GM12878 (cell line): ENCODE measurements at regions of chr5 and their contacts with region 1.

Region 1: DNA sequence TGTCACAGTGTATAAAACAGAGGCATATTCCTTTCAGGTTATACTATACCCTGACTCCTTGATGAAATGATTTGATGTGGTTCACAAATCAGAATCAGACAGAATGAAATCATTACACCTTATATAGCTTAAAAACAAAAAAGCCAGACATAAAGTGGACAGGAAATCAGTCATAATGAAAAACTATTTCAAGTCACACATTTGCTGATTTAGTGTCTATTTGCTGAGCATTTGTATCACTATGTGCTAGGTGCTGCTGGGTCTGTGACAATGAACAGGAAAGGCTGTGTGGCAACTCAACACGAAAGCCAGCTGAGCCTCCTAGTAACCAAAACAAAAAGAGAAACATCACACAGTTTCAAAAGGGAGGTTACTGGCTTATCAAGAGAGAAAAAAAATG is 194.0 kb downstream of the EFNA5 start:
- DNase-seq: peak; percentile 80
- ATAC-seq: peak; percentile 90
- H3K4me3 ChIP-seq: no peak overlapping the region
- H3K27ac ChIP-seq: peak overlapping the region; percentile 50
- H3K4me1 ChIP-seq: peaks cover 23% of the 10 kb centered on the region
- H3K27me3 ChIP-seq: no peaks in the 10 kb centered on the region; a peak in 1 of 4 replicates
- CTCF ChIP-seq: no peak
- EP300 ChIP-seq: peak; percentile 83 to 99
- POLR2A ChIP-seq: no peak
- RAD21 ChIP-seq: 0 out of 2 replicates have a peak, but pooled peaks have one; percentile 4

Region 2: GRCh38 chr5:106849266-106849665 is 627.5 kb before region 1 on chr5:
- CTCF ChIA-PET with region 1: no interaction called
- POLR2A ChIA-PET with region 1: no interaction called
- RAD21 ChIA-PET with region 1: no interaction called
- SMC1A ChIA-PET with region 1: no interaction called
- in situ Hi-C with region 1: no loop called
- intact Hi-C with region 1: no loop called
- DNase-seq: no peak
- ATAC-seq: no peak
- H3K4me3 ChIP-seq: no peak overlapping the region
- H3K27ac ChIP-seq: no peak overlapping the region
- H3K4me1 ChIP-seq: no peaks in the 10 kb centered on the region
- H3K27me3 ChIP-seq: no peaks in the 10 kb centered on the region
- CTCF ChIP-seq: no peak
- EP300 ChIP-seq: no peak
- POLR2A ChIP-seq: no peak
- RAD21 ChIP-seq: no peak

Region 3: DNA sequence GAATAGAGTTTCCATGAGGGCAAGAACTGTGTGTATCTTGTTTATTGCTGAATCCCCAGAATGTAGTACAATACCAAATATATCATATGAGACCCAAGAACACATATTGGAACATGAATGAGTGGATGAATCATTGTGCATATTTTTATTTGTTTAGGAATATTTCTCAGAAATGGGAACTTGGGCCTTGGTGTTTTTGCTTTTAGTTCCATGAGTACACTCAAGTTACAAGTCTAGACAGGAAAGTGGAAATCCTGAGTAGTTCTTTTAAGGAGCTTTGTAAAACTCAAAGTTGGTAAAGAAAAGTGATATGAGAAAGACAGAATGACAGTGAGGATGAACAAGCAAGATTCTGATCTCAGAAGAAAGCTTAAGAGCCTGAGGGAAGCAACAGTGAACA is 453.1 kb before region 1 on chr5:
- CTCF ChIA-PET with region 1: no interaction called
- POLR2A ChIA-PET with region 1: no interaction called
- RAD21 ChIA-PET with region 1: no interaction called
- SMC1A ChIA-PET with region 1: no interaction called
- in situ Hi-C with region 1: no loop called
- intact Hi-C with region 1: no loop called
- DNase-seq: no peak
- ATAC-seq: no peak
- H3K4me3 ChIP-seq: no peak overlapping the region
- H3K27ac ChIP-seq: no peak overlapping the region
- H3K4me1 ChIP-seq: no peaks in the 10 kb centered on the region
- H3K27me3 ChIP-seq: no peaks in the 10 kb centered on the region
- CTCF ChIP-seq: no peak
- EP300 ChIP-seq: no peak
- POLR2A ChIP-seq: no peak
- RAD21 ChIP-seq: no peak

Region 4: DNA sequence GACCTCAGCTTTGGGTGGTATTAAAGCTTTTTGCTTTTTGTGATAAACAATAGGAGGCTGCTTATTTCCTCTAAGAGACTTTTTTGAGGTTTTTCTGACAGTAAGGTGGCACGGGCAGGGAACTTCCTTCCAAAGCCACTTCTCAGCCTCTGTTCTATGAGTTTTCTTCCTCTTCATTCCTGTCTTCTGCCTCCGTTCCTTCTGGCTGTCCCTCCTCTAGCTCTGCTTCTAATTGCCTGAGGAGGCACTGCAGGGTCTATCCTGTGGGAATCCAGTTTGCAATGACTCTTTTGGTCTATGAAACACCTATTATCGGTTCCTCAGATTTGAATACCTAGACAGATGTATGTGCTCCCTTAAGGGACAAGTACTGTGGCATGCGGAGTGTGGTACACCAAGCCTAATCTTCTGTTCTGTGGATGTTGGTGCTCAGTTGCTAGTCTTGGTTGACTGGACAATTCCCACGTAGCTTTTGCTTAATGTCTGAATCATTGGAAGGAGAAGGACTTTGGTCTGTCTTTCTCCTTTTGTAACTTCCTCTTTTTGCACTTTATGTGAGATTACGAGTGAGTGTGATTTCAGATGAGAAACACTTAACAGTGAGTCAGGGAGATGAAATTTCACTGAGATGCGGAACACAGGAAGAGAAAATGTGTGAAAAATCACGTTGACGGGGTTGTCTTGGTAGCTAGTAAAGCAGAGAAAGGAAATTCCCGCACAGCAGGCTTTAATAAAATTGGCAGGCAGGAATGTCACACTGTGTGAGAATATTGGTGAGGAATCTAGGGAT is 111.3 kb before region 1 on chr5:
- CTCF ChIA-PET with region 1: interaction called, 3 read pairs
- POLR2A ChIA-PET with region 1: no interaction called
- RAD21 ChIA-PET with region 1: interaction called, 10 read pairs
- SMC1A ChIA-PET with region 1: interaction called, 8 read pairs
- in situ Hi-C with region 1: no loop called
- intact Hi-C with region 1: no loop called
- DNase-seq: peak; percentile 92
- ATAC-seq: peak; percentile 81
- H3K4me3 ChIP-seq: 0 out of 2 replicates have a peak overlapping the region, but pooled peaks have one; percentile 6
- H3K27ac ChIP-seq: peak overlapping the region; percentile 47
- H3K4me1 ChIP-seq: peaks cover 21% of the 10 kb centered on the region
- H3K27me3 ChIP-seq: no peaks in the 10 kb centered on the region
- CTCF ChIP-seq: 0 out of 6 replicates have a peak, but pooled peaks of 1 of the 3 experiments have one; percentile 3
- EP300 ChIP-seq: peak; percentile 12 to 32; a peak in 2 of 4 replicates
- POLR2A ChIP-seq: no peak
- RAD21 ChIP-seq: no peak

Region 5: GRCh38 chr5:107395632-107396350 is 81.0 kb before region 1 on chr5:
- CTCF ChIA-PET with region 1: no interaction called
- POLR2A ChIA-PET with region 1: no interaction called
- RAD21 ChIA-PET with region 1: interaction called, 40 read pairs
- SMC1A ChIA-PET with region 1: interaction called, 10 read pairs
- in situ Hi-C with region 1: no loop called
- intact Hi-C with region 1: no loop called
- DNase-seq: peak; percentile 57
- ATAC-seq: peak; percentile 83
- H3K4me3 ChIP-seq: no peak overlapping the region
- H3K27ac ChIP-seq: no peak overlapping the region
- H3K4me1 ChIP-seq: peaks cover 8% of the 10 kb centered on the region; the same call in 1 of the 2 replicates
- H3K27me3 ChIP-seq: no peaks in the 10 kb centered on the region
- CTCF ChIP-seq: no peak
- EP300 ChIP-seq: peak; percentile 62 to 68; a peak in 3 of 4 replicates
- POLR2A ChIP-seq: no peak
- RAD21 ChIP-seq: no peak

Region 6: DNA sequence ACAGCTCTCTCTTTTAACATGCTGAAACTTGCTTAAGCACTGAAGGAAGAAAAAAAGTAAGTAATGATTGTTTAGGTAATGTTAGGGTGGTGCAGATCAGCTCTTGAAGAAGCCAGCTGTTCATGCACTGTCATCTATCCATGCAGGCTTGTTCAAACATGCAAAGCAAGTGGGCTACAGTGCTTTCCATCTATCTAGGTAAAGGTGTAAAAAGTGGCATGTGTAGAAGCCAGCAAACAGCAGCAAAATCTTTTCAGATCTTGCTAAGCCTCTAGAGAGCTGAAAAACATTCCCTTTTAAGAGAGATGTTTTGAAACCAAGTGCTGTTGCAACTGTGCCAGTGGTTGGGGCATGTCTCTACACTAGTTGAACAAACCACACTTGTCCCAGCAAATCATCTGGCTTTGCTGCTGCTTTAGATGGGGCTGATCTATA is 20.5 kb before region 1 on chr5:
- CTCF ChIA-PET with region 1: interaction called, 5 read pairs
- POLR2A ChIA-PET with region 1: no interaction called
- RAD21 ChIA-PET with region 1: interaction called, 13 read pairs
- SMC1A ChIA-PET with region 1: interaction called, 33 read pairs
- in situ Hi-C with region 1: no loop called
- intact Hi-C with region 1: no loop called
- DNase-seq: peak; percentile 79
- ATAC-seq: peak; percentile 76
- H3K4me3 ChIP-seq: no peak overlapping the region
- H3K27ac ChIP-seq: peak overlapping the region; percentile 15; the same call in 1 of the 2 replicates
- H3K4me1 ChIP-seq: peaks cover 4% of the 10 kb centered on the region
- H3K27me3 ChIP-seq: no peaks in the 10 kb centered on the region
- CTCF ChIP-seq: no peak
- EP300 ChIP-seq: no peak
- POLR2A ChIP-seq: no peak
- RAD21 ChIP-seq: no peak

Region 7: DNA sequence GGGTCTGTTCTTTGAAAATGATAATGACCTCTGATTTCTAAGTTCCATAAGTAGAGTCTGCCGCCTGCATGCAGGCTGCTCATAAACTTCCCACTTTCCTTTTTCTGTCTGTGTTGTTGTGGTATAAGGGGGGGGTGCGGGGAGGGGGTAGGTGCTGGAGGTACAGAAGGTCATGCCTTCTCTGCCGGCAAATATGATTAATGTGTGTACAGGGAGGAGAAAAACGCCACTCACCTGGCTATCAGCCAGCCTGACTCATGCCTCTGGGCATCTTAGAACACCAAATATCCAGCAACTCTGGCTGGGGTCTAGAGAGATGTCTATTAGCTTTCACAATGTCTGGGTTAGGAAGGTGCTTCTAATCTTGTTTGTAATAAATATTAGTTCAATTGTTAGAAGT is 65.6 kb after region 1 on chr5:
- CTCF ChIA-PET with region 1: no interaction called
- POLR2A ChIA-PET with region 1: no interaction called
- RAD21 ChIA-PET with region 1: interaction called, 3 read pairs
- SMC1A ChIA-PET with region 1: interaction called, 14 read pairs
- in situ Hi-C with region 1: no loop called
- intact Hi-C with region 1: no loop called
- DNase-seq: peak; percentile 52
- ATAC-seq: peak; percentile 75
- H3K4me3 ChIP-seq: no peak overlapping the region; the same call in 1 of the 2 replicates
- H3K27ac ChIP-seq: no peak overlapping the region
- H3K4me1 ChIP-seq: peaks cover 3% of the 10 kb centered on the region; the same call in 1 of the 2 replicates
- H3K27me3 ChIP-seq: no peaks in the 10 kb centered on the region
- CTCF ChIP-seq: no peak
- EP300 ChIP-seq: no peak
- POLR2A ChIP-seq: no peak
- RAD21 ChIP-seq: no peak